CD4-positive, alpha-beta T cell (primary cell): ENCODE measurements at regions of chr12 and their contacts with region 1.

Region 1: GRCh38 chr12:9331218-9331626 is 123.0 kb upstream of the PZP start:
- DNase-seq: peak; percentile 37 to 81 (median 64)
- ATAC-seq: peak; percentile 84
- H3K4me3 ChIP-seq: no peak overlapping the region
- H3K4me3 Mint-ChIP-seq: no peak overlapping the region
- H3K27ac ChIP-seq: no peak overlapping the region
- H3K27ac Mint-ChIP-seq: no peak overlapping the region
- H3K4me1 ChIP-seq: peaks cover 5% of the 10 kb centered on the region
- H3K4me1 Mint-ChIP-seq: peaks cover 24% of the 10 kb centered on the region
- H3K27me3 ChIP-seq: no peaks in the 10 kb centered on the region
- H3K27me3 Mint-ChIP-seq: no peaks in the 10 kb centered on the region
- CTCF ChIP-seq: peak; percentile 99

Region 2: GRCh38 chr12:9707864-9708808 is 376.9 kb after region 1 on chr12:
- CTCF ChIA-PET with region 1: interaction called, 3 read pairs
- POLR2A ChIA-PET with region 1: interaction called, 8 read pairs
- intact Hi-C with region 1: loop called (anchors 2 to 5 kb)
- DNase-seq: peak; percentile 45 to 87 (median 60)
- ATAC-seq: peak; percentile 85
- H3K4me3 ChIP-seq: peak overlapping the region; percentile 30
- H3K4me3 Mint-ChIP-seq: peak overlapping the region; percentile 79
- H3K27ac ChIP-seq: peak overlapping the region; percentile 68 to 71
- H3K27ac Mint-ChIP-seq: peak overlapping the region; percentile 89
- H3K4me1 ChIP-seq: peaks cover 23% of the 10 kb centered on the region
- H3K4me1 Mint-ChIP-seq: peaks cover 79% of the 10 kb centered on the region
- H3K27me3 ChIP-seq: no peaks in the 10 kb centered on the region
- H3K27me3 Mint-ChIP-seq: no peaks in the 10 kb centered on the region
- CTCF ChIP-seq: peak; percentile 74

Region 3: DNA sequence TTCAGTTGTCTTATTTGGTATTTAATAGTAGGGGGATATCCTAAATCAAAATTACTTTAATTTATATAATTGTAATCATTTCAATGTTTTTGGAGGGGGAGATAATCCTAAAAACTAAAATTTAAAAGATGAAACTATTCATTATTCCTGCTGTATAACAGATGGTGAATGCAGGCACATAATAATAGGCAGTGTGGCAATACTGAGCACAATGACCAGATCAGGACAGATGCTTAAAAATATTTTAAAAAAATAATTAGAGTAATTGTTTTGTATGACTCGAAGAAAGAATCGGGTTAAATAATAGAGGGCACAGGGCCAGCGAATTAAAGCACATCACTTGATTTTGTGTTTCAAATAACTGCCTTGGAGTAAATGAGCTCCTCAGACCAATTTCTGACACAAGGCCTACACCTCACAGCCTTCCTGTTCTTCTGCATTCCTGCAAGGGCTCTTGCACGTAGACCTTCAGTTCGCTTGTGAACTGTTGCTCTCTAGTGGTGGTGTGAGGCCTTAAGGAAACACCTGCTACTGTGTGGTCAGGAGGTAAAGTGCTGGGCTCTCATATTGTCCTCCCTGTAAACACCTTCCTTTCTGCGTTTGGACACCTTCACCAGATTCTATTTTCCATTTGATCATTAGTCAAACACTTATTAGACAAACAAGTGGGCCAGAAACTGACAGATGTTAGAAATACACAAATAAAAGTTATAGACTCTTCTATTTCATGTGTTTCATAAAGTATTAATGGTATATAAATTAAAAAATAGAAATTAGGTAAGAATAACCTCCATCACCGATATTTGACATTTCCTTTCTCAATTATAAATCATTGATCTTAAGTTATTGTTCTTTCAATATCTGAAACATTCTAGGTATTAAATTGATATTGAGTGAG is 466.7 kb after region 1 on chr12:
- CTCF ChIA-PET with region 1: no interaction called
- POLR2A ChIA-PET with region 1: no interaction called
- intact Hi-C with region 1: loop called in 1 of 2 experiments (anchors 5 kb)
- DNase-seq: peak; percentile 40 to 91 (median 56)
- ATAC-seq: peak; percentile 95
- H3K4me3 ChIP-seq: no peak overlapping the region
- H3K4me3 Mint-ChIP-seq: peak overlapping the region; percentile 52
- H3K27ac ChIP-seq: peak overlapping the region in 1 of 2 donors; percentile 42
- H3K27ac Mint-ChIP-seq: peak overlapping the region; percentile 5
- H3K4me1 ChIP-seq: peaks cover 19% of the 10 kb centered on the region
- H3K4me1 Mint-ChIP-seq: peaks cover 51% of the 10 kb centered on the region
- H3K27me3 ChIP-seq: no peaks in the 10 kb centered on the region
- H3K27me3 Mint-ChIP-seq: no peaks in the 10 kb centered on the region
- CTCF ChIP-seq: peak; percentile 91

Region 4: GRCh38 chr12:10130042-10130441 is 798.8 kb after region 1 on chr12 and contains the start of gene CLEC7A:
- CTCF ChIA-PET with region 1: no interaction called
- POLR2A ChIA-PET with region 1: no interaction called
- intact Hi-C with region 1: loop called in 1 of 2 experiments (anchors 10 kb)
- DNase-seq: peak in 3 of 14 experiments; percentile 48 to 53 (median 52)
- ATAC-seq: no peak
- H3K4me3 ChIP-seq: peak within 1 kb of the TSS; percentile 21
- H3K4me3 Mint-ChIP-seq: no peak within 1 kb of the TSS
- H3K27ac ChIP-seq: no peak within 1 kb of the TSS
- H3K27ac Mint-ChIP-seq: no peak within 1 kb of the TSS
- H3K4me1 ChIP-seq: peaks cover 4% of the 10 kb centered on the region
- H3K4me1 Mint-ChIP-seq: peaks cover 8% of the 10 kb centered on the region
- H3K27me3 ChIP-seq: no peaks in the 10 kb centered on the region
- H3K27me3 Mint-ChIP-seq: no peaks in the 10 kb centered on the region
- CTCF ChIP-seq: no peak
- total RNA-seq, gene CLEC7A: 2.5 to 3.7 TPM

Region 5: DNA sequence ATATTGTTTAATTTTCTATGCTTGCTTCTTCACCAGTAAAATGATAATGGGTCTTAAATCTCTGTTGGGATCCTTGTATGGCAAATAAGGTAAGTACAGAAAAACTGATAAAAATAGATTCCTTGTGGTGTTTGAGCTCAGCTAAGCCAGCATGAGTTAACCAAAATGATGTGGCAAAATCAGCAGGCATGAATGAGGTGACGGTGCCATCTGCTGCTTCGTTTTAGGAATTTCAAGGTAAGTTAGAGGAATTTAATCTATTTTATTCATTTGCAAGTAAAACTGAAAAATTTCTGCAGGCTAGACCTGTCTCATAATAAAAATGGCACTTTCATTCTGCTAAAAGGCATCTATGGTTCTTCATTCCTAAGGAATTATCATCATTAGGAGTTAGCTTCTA is 808.8 kb after region 1 on chr12:
- CTCF ChIA-PET with region 1: no interaction called
- POLR2A ChIA-PET with region 1: no interaction called
- intact Hi-C with region 1: loop called (anchors 5 to 10 kb)
- DNase-seq: peak in 13 of 14 experiments; percentile 10 to 74 (median 22)
- ATAC-seq: peak; percentile 60
- H3K4me3 ChIP-seq: no peak overlapping the region
- H3K4me3 Mint-ChIP-seq: no peak overlapping the region
- H3K27ac ChIP-seq: no peak overlapping the region
- H3K27ac Mint-ChIP-seq: no peak overlapping the region
- H3K4me1 ChIP-seq: no peaks in the 10 kb centered on the region
- H3K4me1 Mint-ChIP-seq: no peaks in the 10 kb centered on the region
- H3K27me3 ChIP-seq: peaks cover 0 to 4% of the 10 kb centered on the region in 2 experiments
- H3K27me3 Mint-ChIP-seq: peaks cover 4% of the 10 kb centered on the region
- CTCF ChIP-seq: peak; percentile 18